GM13976 (cell line): ENCODE measurements at regions of chr7 and their contacts with region 1.

Region 1: DNA sequence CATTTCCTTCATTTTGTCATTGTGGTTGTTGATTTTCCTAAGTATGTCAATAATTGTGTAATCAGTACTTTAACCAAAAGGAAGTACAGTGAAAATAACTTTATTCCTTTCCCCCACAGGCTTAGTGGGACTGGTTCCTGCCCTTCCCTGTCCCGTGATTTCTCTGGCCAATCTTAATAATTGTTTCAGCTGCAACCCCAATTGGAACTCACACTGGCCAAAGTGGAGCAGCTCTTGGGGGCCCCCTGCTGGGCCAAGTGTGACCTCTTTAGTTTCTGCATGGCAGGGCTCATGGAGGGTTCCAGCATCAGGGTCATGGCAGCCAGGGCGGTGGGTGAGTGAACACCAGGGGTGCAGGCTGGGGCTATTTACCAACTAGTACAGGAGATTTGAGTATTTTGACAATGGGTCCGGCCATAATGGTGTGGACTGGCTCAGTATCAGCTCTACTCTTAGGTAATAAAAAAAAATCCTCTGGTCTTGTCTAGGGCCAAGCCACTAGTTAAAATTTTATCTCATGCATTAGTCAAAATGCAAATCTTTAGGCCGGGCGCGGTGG is 31.7 kb downstream of the CYCS start:
- DNase-seq: peak; percentile 83
- CTCF ChIP-seq: peak; percentile 69

Region 2: DNA sequence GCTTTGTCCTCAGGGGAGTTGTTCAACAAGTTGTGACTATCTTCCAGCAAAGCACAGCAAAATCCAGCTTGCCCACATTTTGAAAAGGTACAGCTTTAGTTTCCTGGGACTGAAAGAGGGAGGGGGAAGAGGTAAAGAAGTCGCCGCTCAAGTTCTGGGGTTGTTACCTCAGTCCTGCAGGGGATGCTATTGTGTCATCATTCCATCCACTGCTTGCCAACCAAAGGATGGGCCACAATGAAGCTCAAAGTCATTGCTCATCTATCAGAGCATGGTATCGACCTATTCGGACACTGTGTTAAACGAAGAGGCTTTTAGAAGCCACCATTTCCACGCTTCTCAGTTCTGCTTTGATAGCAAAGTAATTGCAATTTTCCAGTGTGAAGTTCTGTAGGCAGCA is 775.0 kb before region 1 on chr7:
- in situ Hi-C with region 1: loop called (anchors 25 kb)
- DNase-seq: peak; percentile 48
- CTCF ChIP-seq: peak; percentile 29

Region 3: GRCh38 chr7:24401628-24402593 is 691.4 kb before region 1 on chr7:
- in situ Hi-C with region 1: loop called (anchors 25 kb)
- DNase-seq: peak; percentile 36
- CTCF ChIP-seq: peak; percentile 19

Region 4: GRCh38 chr7:24637706-24638105 is 455.6 kb before region 1 on chr7:
- in situ Hi-C with region 1: no loop called
- DNase-seq: no peak
- CTCF ChIP-seq: no peak

Region 5: GRCh38 chr7:24819916-24820689 is 273.2 kb before region 1 on chr7:
- in situ Hi-C with region 1: loop called (anchors 5 kb)
- DNase-seq: peak; percentile 76
- CTCF ChIP-seq: peak; percentile 76

Region 6: GRCh38 chr7:25167262-25167843 is 74.0 kb after region 1 on chr7:
- in situ Hi-C with region 1: no loop called
- DNase-seq: no peak
- CTCF ChIP-seq: no peak

Region 7: GRCh38 chr7:25259587-25260243 is 166.4 kb after region 1 on chr7:
- in situ Hi-C with region 1: no loop called
- DNase-seq: peak; percentile 46
- CTCF ChIP-seq: peak; percentile 67

Region 8: DNA sequence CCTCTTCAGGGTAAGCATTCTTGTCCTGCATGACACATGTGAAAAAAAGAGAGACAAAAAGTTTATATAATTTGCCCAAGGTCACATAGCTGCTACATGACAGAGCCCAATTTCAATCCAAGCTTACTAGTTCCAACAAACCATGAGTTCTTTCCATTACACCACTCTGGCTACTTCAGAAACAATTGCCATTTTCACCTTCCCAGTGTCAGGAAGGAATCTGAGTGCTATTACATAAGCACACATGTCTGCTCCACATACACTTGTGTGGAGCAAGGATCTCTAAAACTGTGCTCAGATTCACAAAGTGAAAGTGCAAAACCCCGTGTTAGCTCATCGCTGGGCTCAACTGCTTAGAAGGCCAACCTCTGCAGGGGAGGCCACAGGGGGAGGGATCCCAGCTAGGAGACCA is 702.5 kb after region 1 on chr7:
- in situ Hi-C with region 1: no loop called
- DNase-seq: no peak
- CTCF ChIP-seq: no peak